ENCODE measurements at regions of chr17 and their contacts with region 1.

Region 1: DNA sequence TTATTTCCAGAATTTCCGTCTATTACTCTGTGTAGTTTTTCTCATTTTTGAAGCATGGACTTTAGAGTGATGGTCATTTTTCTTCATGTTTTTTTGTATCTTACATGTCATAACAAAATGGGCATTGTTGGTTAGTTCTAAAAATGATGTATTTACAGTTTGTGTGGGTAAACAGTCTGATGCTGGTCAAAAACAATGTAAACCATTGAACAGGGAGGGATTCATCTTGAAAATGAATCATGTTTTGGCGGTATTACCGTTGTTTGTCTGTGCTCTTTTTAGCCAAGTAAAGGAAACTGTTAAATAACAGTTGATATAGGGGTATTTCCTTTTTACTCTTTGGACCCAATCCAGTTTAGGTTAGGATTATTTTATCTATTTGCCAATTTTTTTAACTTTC is 315.8 kb downstream of the BCAS3 start:
- DNase-seq: no peak
- ATAC-seq: no peak
- H3K4me3 ChIP-seq: no peak overlapping the region
- H3K27ac ChIP-seq: no peak overlapping the region
- H3K4me1 ChIP-seq: no peaks in the 10 kb centered on the region
- H3K27me3 ChIP-seq: no peaks in the 10 kb centered on the region
- CTCF ChIP-seq: no peak
- POLR2A ChIP-seq: no peak

Region 2: GRCh38 chr17:60901236-60901635 is 92.3 kb before region 1 on chr17:
- intact Hi-C with region 1: no loop called
- DNase-seq: no peak
- ATAC-seq: no peak
- H3K4me3 ChIP-seq: no peak overlapping the region
- H3K27ac ChIP-seq: no peak overlapping the region
- H3K4me1 ChIP-seq: no peaks in the 10 kb centered on the region
- H3K27me3 ChIP-seq: no peaks in the 10 kb centered on the region
- CTCF ChIP-seq: no peak
- POLR2A ChIP-seq: no peak

Region 3: GRCh38 chr17:60920183-60920599 is 73.3 kb before region 1 on chr17:
- intact Hi-C with region 1: no loop called
- DNase-seq: no peak
- ATAC-seq: peak in 3 of 4 donors; percentile 46 to 53 (median 51)
- H3K4me3 ChIP-seq: no peak overlapping the region
- H3K27ac ChIP-seq: no peak overlapping the region
- H3K4me1 ChIP-seq: no peaks in the 10 kb centered on the region
- H3K27me3 ChIP-seq: no peaks in the 10 kb centered on the region
- CTCF ChIP-seq: no peak
- POLR2A ChIP-seq: no peak

Region 4: GRCh38 chr17:60941028-60941427 is 52.5 kb before region 1 on chr17:
- intact Hi-C with region 1: no loop called
- DNase-seq: peak in 1 of 3 donors; percentile 58
- ATAC-seq: peak; percentile 73 to 95 (median 80)
- H3K4me3 ChIP-seq: no peak overlapping the region
- H3K27ac ChIP-seq: peak overlapping the region in 1 of 3 donors; percentile 9
- H3K4me1 ChIP-seq: no peaks in the 10 kb centered on the region
- H3K27me3 ChIP-seq: no peaks in the 10 kb centered on the region
- CTCF ChIP-seq: no peak
- POLR2A ChIP-seq: no peak

Region 5: DNA sequence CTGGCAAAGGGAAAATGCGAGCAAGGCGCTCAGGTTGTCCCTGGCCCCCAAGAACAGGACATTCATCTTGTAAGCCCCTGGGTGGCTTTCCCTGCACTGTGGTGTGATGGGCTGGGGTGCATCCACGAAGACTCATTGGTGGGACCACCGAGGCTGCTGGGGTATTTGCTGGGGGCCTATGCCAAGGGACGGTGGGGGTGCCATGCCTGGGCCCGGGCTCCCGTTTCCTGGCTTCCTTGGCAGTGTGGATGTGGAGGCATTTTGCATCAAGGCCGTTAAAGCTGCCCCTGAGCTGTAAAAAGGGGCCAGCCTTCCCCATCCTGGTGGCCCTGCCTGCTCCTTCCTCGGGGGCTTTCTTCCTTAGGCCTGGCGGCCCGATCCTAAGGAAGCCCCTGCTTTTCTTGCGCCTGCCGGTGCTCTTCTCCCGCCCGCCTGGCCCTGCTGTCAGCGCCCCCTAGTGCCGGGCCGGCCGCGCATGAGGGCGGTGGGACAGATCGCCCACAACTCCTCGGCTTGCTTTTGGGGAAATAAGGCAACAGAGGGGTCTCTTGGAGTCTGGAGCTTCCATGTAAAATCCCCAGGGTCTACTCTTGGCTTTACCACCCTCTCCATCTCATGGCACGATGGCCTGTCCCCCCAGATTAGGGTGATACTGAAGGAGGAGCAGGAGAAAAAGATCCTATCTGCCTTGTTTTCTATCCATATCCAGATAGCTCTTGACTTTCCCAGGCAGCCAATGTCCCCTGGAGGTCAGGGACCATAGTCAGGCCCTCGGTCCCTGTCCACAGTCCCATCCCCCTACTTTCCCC is 396.4 kb after region 1 on chr17:
- intact Hi-C with region 1: loop called in 1 of 2 experiments (anchors 10 kb)
- DNase-seq: no peak
- ATAC-seq: peak; percentile 48 to 71 (median 64)
- H3K4me3 ChIP-seq: no peak overlapping the region
- H3K27ac ChIP-seq: no peak overlapping the region
- H3K4me1 ChIP-seq: no peaks in the 10 kb centered on the region
- H3K27me3 ChIP-seq: no peaks in the 10 kb centered on the region
- CTCF ChIP-seq: peak; percentile 63 to 86 (median 76)
- POLR2A ChIP-seq: no peak